Aorta (tissue), 5 donors: ENCODE measurements at regions of chr2 and their contacts with region 1.

Region 1: GRCh38 chr2:17851731-17852585 is 26.5 kb upstream of the KCNS3 start:
- DNase-seq: peak; percentile 68 to 79
- ATAC-seq: peak; percentile 76
- H3K4me3 ChIP-seq: no peak overlapping the region
- H3K27ac ChIP-seq: no peak overlapping the region
- H3K4me1 ChIP-seq: no peaks in the 10 kb centered on the region
- H3K27me3 ChIP-seq: no peaks in the 10 kb centered on the region

Region 2: DNA sequence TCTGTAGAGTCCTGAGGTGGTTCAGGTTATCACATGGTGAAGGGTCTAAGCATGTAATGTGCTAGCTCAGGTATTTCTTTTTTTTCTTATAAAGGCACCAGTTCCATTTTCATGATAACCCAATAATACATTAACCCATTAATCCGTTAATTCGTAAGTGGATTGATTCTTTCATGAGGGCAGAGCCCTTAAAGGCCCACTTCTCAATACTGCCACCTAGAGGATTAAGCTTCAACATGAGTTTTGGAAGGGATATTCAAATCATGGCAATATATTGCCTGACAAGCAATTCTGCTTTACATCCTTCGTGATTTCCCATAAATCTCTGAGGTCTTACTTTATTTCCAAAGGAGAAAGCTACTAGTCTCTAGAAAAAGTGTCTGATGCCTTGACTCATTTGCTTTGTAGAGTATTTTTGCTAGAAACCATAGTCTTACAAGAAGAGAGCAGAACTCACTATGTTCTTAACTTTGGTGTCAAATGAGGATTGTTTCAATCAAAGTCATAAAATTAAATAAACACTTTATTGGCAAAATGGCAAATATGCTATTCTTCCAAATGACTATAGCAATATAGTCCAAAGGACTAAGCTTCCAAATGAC is 297.8 kb after region 1 on chr2:
- intact Hi-C with region 1: loop called (anchors 1 to 2 kb)
- DNase-seq: no peak
- ATAC-seq: no peak
- H3K4me3 ChIP-seq: no peak overlapping the region
- H3K27ac ChIP-seq: no peak overlapping the region
- H3K4me1 ChIP-seq: no peaks in the 10 kb centered on the region
- H3K27me3 ChIP-seq: no peaks in the 10 kb centered on the region

Region 3: DNA sequence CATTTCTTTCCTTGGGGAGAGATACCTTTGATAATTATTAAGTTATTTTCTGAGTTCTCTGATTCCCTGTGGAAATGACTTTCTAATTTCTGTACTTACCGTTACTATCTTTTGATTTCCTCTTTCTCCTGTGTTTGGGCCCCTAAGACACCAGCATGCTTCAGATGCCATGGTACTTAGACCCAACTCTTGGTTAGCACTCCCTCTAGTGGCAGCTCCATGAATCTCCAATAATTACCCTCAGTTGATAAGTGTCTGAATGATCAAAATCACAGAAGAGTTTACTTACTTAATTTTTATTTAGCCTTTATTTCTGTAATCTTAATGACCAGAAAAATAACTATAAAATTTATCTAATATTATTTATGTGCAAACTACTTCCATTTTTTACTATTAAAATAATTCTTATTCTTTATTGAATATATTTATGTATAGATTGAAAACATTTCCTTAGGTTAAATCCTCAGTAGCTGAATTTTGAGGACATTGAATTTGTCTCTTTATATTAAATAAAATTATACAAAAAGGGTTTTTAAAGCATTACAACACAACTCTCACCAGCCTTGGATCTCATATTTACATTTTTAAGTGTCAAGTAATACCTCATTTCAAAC is 326.9 kb after region 1 on chr2:
- intact Hi-C with region 1: loop called in 1 of 2 experiments (anchors 5 kb)
- DNase-seq: no peak
- ATAC-seq: no peak
- H3K4me3 ChIP-seq: no peak overlapping the region
- H3K27ac ChIP-seq: no peak overlapping the region
- H3K4me1 ChIP-seq: no peaks in the 10 kb centered on the region
- H3K27me3 ChIP-seq: no peaks in the 10 kb centered on the region

Region 4: GRCh38 chr2:18378020-18378653 is 526.2 kb after region 1 on chr2:
- intact Hi-C with region 1: loop called (anchors 5 kb)
- DNase-seq: no peak
- ATAC-seq: peak; percentile 77
- H3K4me3 ChIP-seq: no peak overlapping the region
- H3K27ac ChIP-seq: no peak overlapping the region
- H3K4me1 ChIP-seq: peaks cover 0 to 5% of the 10 kb centered on the region in 2 donors
- H3K27me3 ChIP-seq: no peaks in the 10 kb centered on the region